GM10248 (cell line): ENCODE measurements at regions of chr5 and their contacts with region 1.

Region 1: GRCh38 chr5:43389679-43390329 is 22.4 kb downstream of the CCL28 start:
- DNase-seq: peak; percentile 68
- CTCF ChIP-seq: peak; percentile 58

Region 2: DNA sequence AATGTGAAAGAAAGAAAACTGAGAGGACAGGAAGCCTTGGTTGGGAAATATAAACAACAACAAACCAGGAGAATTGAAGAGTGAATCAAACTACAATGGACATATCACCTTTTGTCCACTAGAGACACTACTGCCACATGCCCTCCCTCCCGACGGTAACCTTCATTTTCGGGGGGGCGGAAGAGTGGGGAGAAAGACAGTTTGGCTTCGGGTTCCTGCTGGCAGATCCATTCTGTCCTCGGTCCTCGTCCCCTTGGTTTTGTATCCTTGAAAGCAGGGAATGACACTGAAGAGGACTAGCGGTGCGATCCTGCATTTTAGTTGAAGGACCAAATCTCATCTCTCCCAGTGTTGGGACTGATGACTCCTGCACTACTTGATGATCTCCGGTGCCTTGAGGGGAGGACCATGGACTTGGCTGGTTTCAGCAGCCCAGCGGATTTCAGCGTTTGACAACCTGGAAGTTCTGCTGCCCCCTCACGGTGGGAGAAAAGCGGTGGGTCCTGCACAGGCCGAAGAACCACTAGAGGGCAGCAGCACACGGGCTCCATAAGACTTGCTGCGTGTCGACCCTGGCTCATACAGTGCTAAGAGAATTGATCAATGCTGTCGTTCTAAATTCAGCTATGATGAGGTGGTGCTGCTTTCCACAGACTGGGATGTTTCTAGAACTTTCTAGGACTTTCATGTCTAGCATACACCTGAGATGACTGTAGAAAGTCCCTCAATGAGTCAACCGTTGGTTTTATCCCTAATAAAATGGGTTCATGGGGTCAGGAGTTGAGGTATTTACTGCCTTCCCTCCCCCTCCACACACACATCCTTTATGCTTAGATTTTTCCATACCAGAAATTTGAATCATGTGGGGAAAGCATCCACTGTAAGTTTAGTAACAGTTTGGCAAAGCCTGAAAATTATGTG is 284.2 kb before region 1 on chr5:
- CTCF ChIA-PET with region 1: interaction called, 32 read pairs
- POLR2A ChIA-PET with region 1: no interaction called
- DNase-seq: peak; percentile 87
- CTCF ChIP-seq: peak; percentile 100

Region 3: GRCh38 chr5:43140286-43140685 is 249.5 kb before region 1 on chr5:
- CTCF ChIA-PET with region 1: interaction called, 13 read pairs
- POLR2A ChIA-PET with region 1: no interaction called
- DNase-seq: no peak
- CTCF ChIP-seq: no peak

Region 4: DNA sequence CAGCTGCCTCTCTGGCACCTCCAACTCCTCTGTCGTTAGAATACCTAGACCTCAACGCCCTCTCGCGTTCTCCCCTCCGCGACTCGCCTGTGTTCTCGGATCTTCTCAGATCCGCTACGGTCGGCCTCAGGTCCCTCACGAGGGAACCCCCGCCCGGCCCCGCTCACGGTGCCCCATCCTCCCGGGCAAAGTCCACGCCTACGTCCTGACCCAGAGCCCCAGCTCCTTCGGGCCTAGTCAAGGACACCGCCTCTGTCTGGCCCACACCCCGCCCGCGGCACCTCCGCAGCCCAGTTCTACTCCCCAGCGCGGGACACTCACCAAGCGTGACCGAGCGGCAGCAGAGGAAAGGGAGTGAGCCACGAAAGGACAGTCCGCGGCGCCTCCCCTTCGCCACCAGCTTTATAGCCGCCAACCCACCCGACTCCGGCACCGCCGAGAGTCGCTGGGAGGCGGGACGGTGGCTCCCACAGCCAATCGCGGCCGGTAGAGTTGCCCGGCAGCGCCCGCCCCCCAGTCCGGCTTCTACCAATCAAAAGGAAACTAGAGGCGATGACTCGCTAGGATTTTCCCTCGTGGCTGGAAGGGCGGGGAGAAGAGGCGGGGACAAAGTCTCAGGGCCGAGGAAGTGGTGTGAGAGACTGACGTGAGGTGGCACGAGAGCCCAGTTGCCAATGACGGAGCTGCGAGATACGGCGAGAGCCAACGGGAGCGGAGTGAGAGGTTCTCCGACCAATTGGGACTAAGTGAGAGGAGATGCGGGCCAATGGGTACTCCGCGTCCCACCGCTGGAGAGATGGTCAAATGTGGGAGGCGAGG is 76.6 kb before region 1 on chr5 and contains the start of gene HMGCS1:
- CTCF ChIA-PET with region 1: interaction called, 11 read pairs
- POLR2A ChIA-PET with region 1: interaction called, 6 read pairs
- DNase-seq: peak; percentile 97
- CTCF ChIP-seq: no peak

Region 5: GRCh38 chr5:43400081-43400480 is 10.3 kb after region 1 on chr5:
- CTCF ChIA-PET with region 1: interaction called, 21 read pairs
- POLR2A ChIA-PET with region 1: no interaction called
- DNase-seq: no peak
- CTCF ChIP-seq: no peak

Region 6: GRCh38 chr5:43484106-43484849 is 94.5 kb after region 1 on chr5:
- CTCF ChIA-PET with region 1: interaction called, 13 read pairs
- POLR2A ChIA-PET with region 1: no interaction called
- DNase-seq: peak; percentile 77
- CTCF ChIP-seq: peak; percentile 78